ENCODE measurements at regions of chr6 and their contacts with region 1.

Region 1: GRCh38 chr6:52419809-52420670 is at the start of gene EFHC1:
- DNase-seq: peak; percentile 98
- H3K4me3 ChIP-seq: peak within 1 kb of the TSS; percentile 29 to 73 (median 72)
- H3K27ac ChIP-seq: peak within 1 kb of the TSS; percentile 84
- H3K4me1 ChIP-seq: peaks cover 75% of the 10 kb centered on the region
- H3K27me3 ChIP-seq: no peaks in the 10 kb centered on the region
- CTCF ChIP-seq: no peak
- POLR2A ChIP-seq: peak; percentile 96
- total RNA-seq, gene EFHC1: 14.6 and 21.1 TPM in 2 replicates

Region 2: DNA sequence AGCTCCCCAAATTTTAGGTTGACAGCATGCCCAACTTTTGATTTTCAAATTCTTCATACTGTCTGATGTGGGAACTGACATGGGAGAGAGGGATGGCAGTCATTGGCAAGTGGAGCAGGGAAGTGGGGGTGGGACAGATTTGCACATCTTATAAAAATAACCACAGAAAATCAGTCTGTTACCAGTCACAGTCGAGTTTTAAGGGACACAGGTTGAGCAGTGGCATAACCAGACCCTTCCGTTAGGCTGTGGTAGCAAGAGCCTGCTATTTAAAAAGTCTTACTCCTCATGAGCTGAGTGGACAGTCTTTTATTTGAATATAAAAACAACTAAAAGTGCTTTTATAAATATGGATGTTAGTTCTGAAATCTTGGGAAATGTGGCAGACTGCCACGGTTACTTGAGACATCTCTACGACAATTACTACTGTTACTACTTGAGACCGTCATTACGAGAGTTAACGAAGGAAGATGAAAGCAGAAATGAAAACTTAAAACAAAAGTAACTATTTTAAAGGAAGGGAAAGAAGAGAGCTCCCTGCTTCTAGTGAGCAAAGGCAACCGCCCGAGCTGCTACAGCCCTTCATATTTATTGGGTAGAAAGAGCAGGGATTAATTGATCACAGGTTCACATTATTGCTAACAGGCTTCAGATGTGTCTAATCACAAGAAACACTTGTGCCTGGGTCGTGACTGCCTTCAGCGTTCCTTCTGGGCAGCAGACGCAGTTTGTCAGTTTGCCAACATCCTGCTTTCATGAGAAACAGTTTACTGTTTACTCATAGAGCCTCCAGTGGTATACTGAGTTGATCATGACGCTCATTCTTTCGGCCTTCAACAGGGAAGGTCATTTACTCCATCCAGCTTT is 71.4 kb after region 1 on chr6:
- CTCF ChIA-PET with region 1: interaction called, 14 read pairs
- POLR2A ChIA-PET with region 1: interaction called, 5 read pairs
- dilution Hi-C with region 1: no loop called
- intact Hi-C with region 1: loop called (anchors 1 kb)
- DNase-seq: peak; percentile 44
- H3K4me3 ChIP-seq: no peak overlapping the region
- H3K27ac ChIP-seq: peak overlapping the region; percentile 65
- H3K4me1 ChIP-seq: peaks cover 35% of the 10 kb centered on the region
- H3K27me3 ChIP-seq: no peaks in the 10 kb centered on the region
- CTCF ChIP-seq: no peak
- POLR2A ChIP-seq: no peak

Region 3: GRCh38 chr6:52517502-52518278 is 97.7 kb after region 1 on chr6:
- CTCF ChIA-PET with region 1: interaction called, 13 read pairs
- POLR2A ChIA-PET with region 1: no interaction called
- dilution Hi-C with region 1: no loop called
- intact Hi-C with region 1: loop called (anchors 1 kb)
- DNase-seq: peak; percentile 94
- H3K4me3 ChIP-seq: no peak overlapping the region
- H3K27ac ChIP-seq: peak overlapping the region; percentile 97
- H3K4me1 ChIP-seq: peaks cover 69% of the 10 kb centered on the region
- H3K27me3 ChIP-seq: no peaks in the 10 kb centered on the region
- CTCF ChIP-seq: no peak
- POLR2A ChIP-seq: peak; percentile 27

Region 4: GRCh38 chr6:52551401-52552277 is 131.6 kb after region 1 on chr6:
- CTCF ChIA-PET with region 1: interaction called, 10 read pairs
- POLR2A ChIA-PET with region 1: interaction called, 4 read pairs
- dilution Hi-C with region 1: loop called (anchors 25 kb)
- intact Hi-C with region 1: loop called (anchors 1 kb)
- DNase-seq: peak; percentile 94
- H3K4me3 ChIP-seq: no peak overlapping the region
- H3K27ac ChIP-seq: peak overlapping the region; percentile 82
- H3K4me1 ChIP-seq: peaks cover 60% of the 10 kb centered on the region
- H3K27me3 ChIP-seq: no peaks in the 10 kb centered on the region
- CTCF ChIP-seq: no peak
- POLR2A ChIP-seq: no peak

Region 5: GRCh38 chr6:52647199-52647598 is 227.2 kb after region 1 on chr6:
- CTCF ChIA-PET with region 1: interaction called, 50 read pairs
- POLR2A ChIA-PET with region 1: no interaction called
- dilution Hi-C with region 1: no loop called
- intact Hi-C with region 1: loop called (anchors 1 kb)
- DNase-seq: no peak
- H3K4me3 ChIP-seq: no peak overlapping the region
- H3K27ac ChIP-seq: no peak overlapping the region
- H3K4me1 ChIP-seq: no peaks in the 10 kb centered on the region
- H3K27me3 ChIP-seq: peaks cover 0 to 2% of the 10 kb centered on the region in 2 experiments
- CTCF ChIP-seq: no peak
- POLR2A ChIP-seq: no peak

Region 6: DNA sequence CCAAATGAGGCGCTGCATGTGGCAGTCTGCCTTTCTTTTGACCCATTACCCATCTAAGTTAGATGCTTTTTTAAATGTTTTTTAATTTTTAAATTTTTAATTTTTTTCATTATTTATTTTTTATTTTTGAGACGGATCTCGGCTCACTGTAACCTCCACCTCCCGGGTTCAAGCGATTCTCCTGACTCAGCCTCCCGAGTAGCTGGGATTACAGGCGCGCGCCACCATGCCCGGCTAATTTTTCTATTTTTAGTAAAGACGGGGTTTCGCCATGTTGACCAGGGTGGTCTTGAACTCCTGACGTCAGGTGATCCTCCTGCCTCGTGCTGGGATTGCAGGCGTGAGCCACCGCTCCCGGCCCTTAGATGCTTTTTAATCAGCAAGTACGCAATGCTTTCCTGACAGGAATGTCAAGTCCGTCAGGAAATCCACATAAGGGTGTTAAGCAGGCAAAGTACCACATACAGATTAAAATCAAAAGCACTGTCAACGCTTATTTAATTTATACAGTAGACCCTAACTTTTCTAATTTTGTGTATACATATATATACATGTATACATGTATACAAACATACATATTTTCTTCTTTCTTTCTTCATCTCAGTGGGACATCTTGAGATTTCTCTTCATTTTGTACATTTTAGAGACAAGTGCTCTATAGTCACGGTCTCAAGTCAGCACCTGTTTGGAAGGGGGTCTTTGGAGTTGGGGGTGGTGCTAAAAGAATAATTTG is 576.0 kb after region 1 on chr6:
- CTCF ChIA-PET with region 1: no interaction called
- POLR2A ChIA-PET with region 1: interaction called, 3 read pairs
- dilution Hi-C with region 1: no loop called
- intact Hi-C with region 1: loop called (anchors 2 kb)
- DNase-seq: peak; percentile 69
- H3K4me3 ChIP-seq: peak overlapping the region in 1 of 3 experiments; percentile 19
- H3K27ac ChIP-seq: no peak overlapping the region
- H3K4me1 ChIP-seq: peaks cover 13% of the 10 kb centered on the region
- H3K27me3 ChIP-seq: no peaks in the 10 kb centered on the region
- CTCF ChIP-seq: no peak
- POLR2A ChIP-seq: no peak

Measured in endothelial cell of umbilical vein (primary cell).